CD8-positive, alpha-beta T cell (primary cell): ENCODE measurements at regions of chr16 and their contacts with region 1.

Region 1: GRCh38 chr16:30657866-30658730 is at the start of gene FBRS:
- DNase-seq: peak; percentile 99 to 100 (median 100)
- ATAC-seq: peak; percentile 75
- H3K4me3 ChIP-seq: peak within 1 kb of the TSS; percentile 61 to 91
- H3K4me3 Mint-ChIP-seq: peak within 1 kb of the TSS; percentile 98
- H3K27ac ChIP-seq: peak within 1 kb of the TSS; percentile 97 to 99
- H3K27ac Mint-ChIP-seq: peak within 1 kb of the TSS; percentile 100
- H3K4me1 ChIP-seq: peaks cover 36% of the 10 kb centered on the region
- H3K4me1 Mint-ChIP-seq: peaks cover 39% of the 10 kb centered on the region
- H3K27me3 ChIP-seq: no peaks in the 10 kb centered on the region
- H3K27me3 Mint-ChIP-seq: no peaks in the 10 kb centered on the region
- CTCF ChIP-seq: peak; percentile 66
- total RNA-seq, gene FBRS: 222 to 224 TPM

Region 2: GRCh38 chr16:30091474-30092372 is 566.4 kb before region 1 on chr16 and contains the start of gene TBX6:
- CTCF ChIA-PET with region 1: no interaction called
- POLR2A ChIA-PET with region 1: no interaction called
- intact Hi-C with region 1: loop called in 1 of 2 experiments (anchors 10 kb)
- DNase-seq: peak; percentile 86 to 97 (median 92)
- ATAC-seq: peak; percentile 82
- H3K4me3 ChIP-seq: peak within 1 kb of the TSS; percentile 59 to 69
- H3K4me3 Mint-ChIP-seq: peak within 1 kb of the TSS; percentile 87
- H3K27ac ChIP-seq: peak within 1 kb of the TSS; percentile 58 to 69
- H3K27ac Mint-ChIP-seq: peak within 1 kb of the TSS; percentile 91
- H3K4me1 ChIP-seq: peaks cover 55% of the 10 kb centered on the region
- H3K4me1 Mint-ChIP-seq: peaks cover 48% of the 10 kb centered on the region
- H3K27me3 ChIP-seq: no peaks in the 10 kb centered on the region
- H3K27me3 Mint-ChIP-seq: no peaks in the 10 kb centered on the region
- CTCF ChIP-seq: peak; percentile 73
- total RNA-seq, gene TBX6: 0.16 to 0.22 TPM

Region 3: DNA sequence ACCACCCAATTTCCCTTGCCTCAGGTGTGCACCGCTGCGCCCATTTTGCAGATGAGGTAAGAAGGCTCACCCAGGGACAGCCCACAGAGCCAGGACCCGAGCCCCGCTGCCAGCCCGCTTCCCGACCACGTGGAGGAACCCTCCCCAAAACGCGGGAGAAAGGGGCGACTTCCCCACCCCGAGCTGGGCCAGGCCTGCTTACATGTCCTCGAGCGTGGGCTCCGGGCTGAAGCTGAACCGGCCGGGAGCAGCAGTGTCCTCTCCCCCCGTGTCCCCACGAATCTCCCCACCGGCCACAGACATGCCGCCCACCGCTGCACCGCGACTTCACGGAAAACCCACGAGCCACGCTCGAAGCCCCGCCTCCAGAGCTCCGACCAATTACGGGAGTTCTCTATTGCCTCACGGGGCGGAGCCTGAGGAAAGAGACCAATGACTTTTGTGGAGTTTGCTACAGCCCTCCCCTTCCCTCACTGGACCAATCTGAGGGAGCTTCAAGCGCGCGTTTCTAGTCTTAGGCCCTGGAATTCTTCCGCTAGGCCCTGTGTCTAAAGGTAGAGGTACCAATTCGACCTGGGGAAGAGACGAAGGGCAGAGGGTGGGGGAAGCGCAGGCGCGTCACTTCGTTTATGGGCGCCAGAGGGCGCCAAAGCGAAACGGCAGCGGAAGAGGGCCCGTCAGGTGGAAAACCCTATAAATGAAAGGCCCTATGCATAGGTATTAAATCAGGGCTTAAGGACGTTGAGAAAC is 228.2 kb before region 1 on chr16 and contains the start of gene DCTPP1:
- CTCF ChIA-PET with region 1: interaction called, 4 read pairs
- POLR2A ChIA-PET with region 1: interaction called, 6 read pairs
- intact Hi-C with region 1: loop called (anchors 1 kb)
- DNase-seq: peak; percentile 89 to 100 (median 95)
- ATAC-seq: peak; percentile 96
- H3K4me3 ChIP-seq: peak within 1 kb of the TSS; percentile 62 to 71
- H3K4me3 Mint-ChIP-seq: no peak within 1 kb of the TSS
- H3K27ac ChIP-seq: peak within 1 kb of the TSS; percentile 60 to 72
- H3K27ac Mint-ChIP-seq: no peak within 1 kb of the TSS
- H3K4me1 ChIP-seq: peaks cover 18% of the 10 kb centered on the region
- H3K4me1 Mint-ChIP-seq: peaks cover 19% of the 10 kb centered on the region
- H3K27me3 ChIP-seq: no peaks in the 10 kb centered on the region
- H3K27me3 Mint-ChIP-seq: no peaks in the 10 kb centered on the region
- CTCF ChIP-seq: peak; percentile 63
- total RNA-seq, gene DCTPP1: 4.0 to 5.5 TPM

Region 4: GRCh38 chr16:30571695-30572600 is 86.2 kb before region 1 on chr16 and contains the start of gene ZNF688:
- CTCF ChIA-PET with region 1: no interaction called
- POLR2A ChIA-PET with region 1: interaction called, 7 read pairs
- intact Hi-C with region 1: loop called in 1 of 2 experiments (anchors 2 kb)
- DNase-seq: peak; percentile 89 to 99 (median 94)
- ATAC-seq: peak; percentile 81
- H3K4me3 ChIP-seq: peak within 1 kb of the TSS; percentile 85 to 86
- H3K4me3 Mint-ChIP-seq: peak within 1 kb of the TSS; percentile 90
- H3K27ac ChIP-seq: peak within 1 kb of the TSS; percentile 84 to 94
- H3K27ac Mint-ChIP-seq: peak within 1 kb of the TSS; percentile 98
- H3K4me1 ChIP-seq: peaks cover 40% of the 10 kb centered on the region
- H3K4me1 Mint-ChIP-seq: peaks cover 34% of the 10 kb centered on the region
- H3K27me3 ChIP-seq: no peaks in the 10 kb centered on the region
- H3K27me3 Mint-ChIP-seq: no peaks in the 10 kb centered on the region
- CTCF ChIP-seq: no peak
- total RNA-seq, gene ZNF688: 6.1 to 7.1 TPM

Region 5: GRCh38 chr16:30698139-30698815 is 40.2 kb after region 1 on chr16:
- CTCF ChIA-PET with region 1: interaction called, 73 read pairs
- POLR2A ChIA-PET with region 1: interaction called, 43 read pairs
- intact Hi-C with region 1: loop called (anchors 1 kb)
- DNase-seq: peak; percentile 96 to 99 (median 99)
- ATAC-seq: peak; percentile 74
- H3K4me3 ChIP-seq: peak overlapping the region; percentile 84 to 99
- H3K4me3 Mint-ChIP-seq: peak overlapping the region; percentile 97
- H3K27ac ChIP-seq: peak overlapping the region; percentile 98 to 100
- H3K27ac Mint-ChIP-seq: peak overlapping the region; percentile 100
- H3K4me1 ChIP-seq: peaks cover 24% of the 10 kb centered on the region
- H3K4me1 Mint-ChIP-seq: peaks cover 35% of the 10 kb centered on the region
- H3K27me3 ChIP-seq: no peaks in the 10 kb centered on the region
- H3K27me3 Mint-ChIP-seq: no peaks in the 10 kb centered on the region
- CTCF ChIP-seq: no peak

Region 6: GRCh38 chr16:31032736-31033708 is 374.9 kb after region 1 on chr16 and contains the start of gene STX4:
- CTCF ChIA-PET with region 1: no interaction called
- POLR2A ChIA-PET with region 1: no interaction called
- intact Hi-C with region 1: loop called in 1 of 2 experiments (anchors 2 kb)
- DNase-seq: peak; percentile 93 to 100 (median 97)
- ATAC-seq: peak; percentile 73
- H3K4me3 ChIP-seq: peak within 1 kb of the TSS; percentile 84 to 88
- H3K4me3 Mint-ChIP-seq: peak within 1 kb of the TSS; percentile 98
- H3K27ac ChIP-seq: peak within 1 kb of the TSS; percentile 98 to 99
- H3K27ac Mint-ChIP-seq: peak within 1 kb of the TSS; percentile 99
- H3K4me1 ChIP-seq: peaks cover 18% of the 10 kb centered on the region
- H3K4me1 Mint-ChIP-seq: peaks cover 28% of the 10 kb centered on the region
- H3K27me3 ChIP-seq: no peaks in the 10 kb centered on the region
- H3K27me3 Mint-ChIP-seq: no peaks in the 10 kb centered on the region
- CTCF ChIP-seq: no peak
- total RNA-seq, gene STX4: 63.8 to 69.9 TPM